ENCODE measurements at regions of chr5 and their contacts with region 1.

Region 1: GRCh38 chr5:89457411-89458331 is 574.7 kb upstream of the MEF2C start:
- DNase-seq: peak; percentile 56 to 80
- ATAC-seq: peak; percentile 98 to 99 (median 98)
- H3K4me3 ChIP-seq: peak overlapping the region; percentile 39
- H3K27ac ChIP-seq: peak overlapping the region; percentile 92
- H3K4me1 ChIP-seq: peaks cover 16% of the 10 kb centered on the region
- H3K27me3 ChIP-seq: no peaks in the 10 kb centered on the region
- CTCF ChIP-seq: no peak

Region 2: GRCh38 chr5:89435347-89435746 is 22.3 kb before region 1 on chr5:
- intact Hi-C with region 1: loop called in 1 of 2 experiments (anchors 2 kb)
- DNase-seq: no peak
- ATAC-seq: no peak
- H3K4me3 ChIP-seq: no peak overlapping the region
- H3K27ac ChIP-seq: no peak overlapping the region
- H3K4me1 ChIP-seq: peaks cover 21% of the 10 kb centered on the region
- H3K27me3 ChIP-seq: no peaks in the 10 kb centered on the region
- CTCF ChIP-seq: no peak

Region 3: GRCh38 chr5:89729623-89730301 is 272.1 kb after region 1 on chr5:
- intact Hi-C with region 1: loop called in 1 of 2 experiments (anchors 5 kb)
- DNase-seq: no peak
- ATAC-seq: peak in 3 of 4 donors; percentile 33 to 61 (median 59)
- H3K4me3 ChIP-seq: no peak overlapping the region
- H3K27ac ChIP-seq: peak overlapping the region; percentile 48
- H3K4me1 ChIP-seq: peaks cover 55% of the 10 kb centered on the region
- H3K27me3 ChIP-seq: no peaks in the 10 kb centered on the region
- CTCF ChIP-seq: peak; percentile 38

Measured in psoas muscle (tissue), 8 donors.